Heart right ventricle (tissue), 16 donors: ENCODE measurements at regions of chr3 and their contacts with region 1.

Region 1: DNA sequence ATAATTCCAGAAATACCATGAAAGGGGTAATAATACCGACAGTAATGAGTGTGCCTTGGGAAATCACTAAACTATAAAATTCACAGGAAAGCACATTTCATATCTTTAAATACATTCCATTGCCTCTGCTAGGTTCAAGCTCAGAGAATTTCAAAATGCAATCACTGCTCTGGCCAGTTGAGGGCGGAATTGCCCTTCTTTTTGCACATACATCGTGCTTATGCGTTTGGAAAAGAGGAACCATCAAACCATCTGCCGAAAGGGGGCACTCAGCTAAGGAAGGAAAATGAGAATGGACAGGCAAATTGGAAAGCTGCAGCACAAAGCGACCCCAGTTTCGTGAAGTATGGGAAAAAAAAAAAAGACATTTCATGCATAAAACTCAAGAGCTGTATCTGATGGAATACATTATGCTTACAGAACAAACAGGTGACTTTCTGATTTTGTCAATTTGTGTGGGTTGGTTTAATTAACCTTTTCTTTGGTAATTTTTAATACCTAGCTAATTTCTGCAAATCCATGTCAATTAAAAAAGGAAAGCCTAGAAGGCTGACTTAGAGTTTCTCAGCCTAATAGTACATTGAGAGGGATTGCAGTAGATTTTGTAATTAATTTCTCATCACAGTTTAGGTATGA is 61.4 kb downstream of the TUSC7 start:
- DNase-seq: peak; percentile 13 to 44
- ATAC-seq: peak in 6 of 8 donors; percentile 46 to 78 (median 56)
- H3K4me3 ChIP-seq: no peak overlapping the region
- H3K27ac ChIP-seq: no peak overlapping the region
- H3K4me1 ChIP-seq: no peaks in the 10 kb centered on the region
- H3K27me3 ChIP-seq: peaks cover 0 to 7% (median 0%) of the 10 kb centered on the region in 7 donors
- CTCF ChIP-seq: peak; percentile 41 to 86 (median 75)

Region 2: DNA sequence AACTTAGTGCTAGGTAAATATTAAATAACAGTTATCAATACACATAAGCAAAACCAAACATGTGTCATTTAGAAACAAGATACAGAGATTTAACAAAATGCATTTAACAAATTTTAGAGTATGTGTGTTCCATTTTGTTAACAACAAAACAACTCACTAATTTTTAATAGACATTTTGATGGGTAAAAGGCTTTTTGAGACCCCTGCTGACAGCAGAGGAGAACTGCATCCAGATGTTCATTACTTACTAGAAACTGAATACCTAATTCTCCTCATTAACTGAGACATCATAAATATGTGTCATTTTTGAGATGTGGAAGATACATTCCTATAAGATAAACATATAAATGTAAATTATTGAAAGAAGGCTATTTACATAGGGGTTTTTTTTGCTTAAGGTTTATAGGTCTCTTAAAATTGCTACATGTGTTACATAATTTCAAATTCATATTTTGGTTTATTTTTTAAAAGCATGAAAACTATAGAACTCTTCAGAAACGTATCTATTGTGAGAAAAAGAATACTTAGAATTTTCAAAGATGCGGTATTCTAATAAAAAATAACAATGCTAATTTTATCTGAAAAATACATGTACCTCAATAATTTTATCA is 948.5 kb after region 1 on chr3:
- intact Hi-C with region 1: loop called in 2 of 10 experiments (anchors 10 kb)
- DNase-seq: no peak
- ATAC-seq: no peak
- H3K4me3 ChIP-seq: no peak overlapping the region
- H3K27ac ChIP-seq: no peak overlapping the region
- H3K4me1 ChIP-seq: no peaks in the 10 kb centered on the region
- H3K27me3 ChIP-seq: peaks cover 0 to 6% (median 0%) of the 10 kb centered on the region in 7 donors
- CTCF ChIP-seq: peak; percentile 21 to 76 (median 65)

Region 3: DNA sequence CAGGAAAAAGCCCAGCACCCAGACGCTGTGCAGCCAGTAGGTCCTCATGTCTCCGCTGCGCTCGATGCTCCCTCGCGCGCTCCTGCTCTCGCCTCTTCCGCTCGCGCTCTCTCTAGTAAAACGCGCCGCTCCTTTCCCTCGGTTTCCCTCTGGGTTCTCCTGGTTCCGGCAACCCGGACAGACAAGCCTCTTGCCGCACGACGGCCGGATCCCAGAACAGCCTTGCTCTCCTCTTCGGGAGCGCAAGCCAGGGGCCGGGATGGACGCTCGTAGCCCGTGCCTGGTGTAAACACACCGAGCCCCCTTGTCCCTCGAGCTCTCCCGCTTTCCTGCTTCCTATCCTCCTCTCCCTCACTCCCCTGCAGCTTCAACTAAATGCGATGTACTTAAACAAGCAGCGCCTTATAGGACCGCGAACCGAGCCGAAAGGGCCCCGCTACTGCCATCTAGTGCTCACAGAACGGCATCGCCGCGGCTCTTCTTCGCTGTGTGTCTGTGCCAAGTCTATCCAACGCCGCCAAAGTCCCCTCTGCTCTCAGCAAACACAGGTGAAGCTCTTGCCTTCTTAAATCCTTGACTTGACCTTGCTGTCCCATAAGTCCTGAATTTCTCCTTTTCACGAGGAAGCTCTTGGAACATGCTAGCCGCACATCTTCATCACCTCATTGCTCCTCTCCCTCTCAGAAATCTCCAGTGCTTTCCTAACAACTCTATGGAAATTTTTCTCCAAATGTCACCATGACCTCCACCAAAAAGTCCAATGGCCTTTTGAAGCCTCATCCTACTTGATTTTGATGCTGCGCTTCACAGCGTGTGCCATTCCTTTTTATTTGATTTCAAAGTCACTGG is 1226.5 kb after region 1 on chr3:
- intact Hi-C with region 1: loop called in 1 of 10 experiments (anchors 10 kb)
- DNase-seq: peak; percentile 48 to 64
- ATAC-seq: peak; percentile 84 to 94 (median 90)
- H3K4me3 ChIP-seq: peak overlapping the region in 9 of 10 donors; percentile 21 to 61 (median 47)
- H3K27ac ChIP-seq: no peak overlapping the region
- H3K4me1 ChIP-seq: peaks cover 0 to 11% (median 5%) of the 10 kb centered on the region in 9 donors
- H3K27me3 ChIP-seq: peaks cover 0 to 49% (median 34%) of the 10 kb centered on the region in 7 donors
- CTCF ChIP-seq: peak; percentile 58 to 84 (median 79)

Region 4: DNA sequence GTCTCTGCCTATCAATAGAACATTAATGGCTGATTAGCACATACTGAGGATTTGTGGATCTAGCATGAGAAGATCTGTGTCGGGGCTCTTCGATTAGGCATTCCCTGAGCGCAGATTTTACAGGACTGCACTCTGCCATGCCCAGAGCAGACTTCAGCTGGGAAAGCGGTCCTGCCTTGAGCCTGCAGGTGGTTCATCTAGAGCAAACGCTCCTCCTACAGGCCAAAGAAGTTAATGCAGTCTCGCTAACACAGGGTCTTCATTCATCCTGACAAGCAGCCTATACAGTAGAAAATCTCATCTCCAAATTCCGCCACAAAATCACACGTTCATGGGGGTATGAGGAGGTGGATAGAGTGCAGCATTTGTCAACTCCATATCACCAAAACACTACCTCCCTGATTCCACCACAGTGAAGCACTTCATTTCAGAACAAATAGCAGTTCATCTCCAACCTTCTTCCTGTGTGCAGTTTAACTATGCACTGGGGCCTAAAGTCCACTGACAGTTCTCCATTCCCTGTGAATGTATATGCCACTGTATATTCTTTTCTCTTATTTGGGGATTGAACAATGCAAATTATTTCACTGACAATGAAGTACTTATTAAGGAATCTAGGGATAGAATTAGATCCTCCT is 1857.9 kb after region 1 on chr3:
- intact Hi-C with region 1: loop called in 1 of 10 experiments (anchors 10 kb)
- DNase-seq: peak; percentile 16 to 57
- ATAC-seq: peak in 6 of 8 donors; percentile 49 to 79 (median 72)
- H3K4me3 ChIP-seq: no peak overlapping the region
- H3K27ac ChIP-seq: no peak overlapping the region
- H3K4me1 ChIP-seq: no peaks in the 10 kb centered on the region
- H3K27me3 ChIP-seq: no peaks in the 10 kb centered on the region
- CTCF ChIP-seq: peak; percentile 56 to 82 (median 70)